Dendritic cell treated with granulocyte-macrophage colony-stimulating factor and Interleukin-4, amounts not matched to agents 40 ng/mL and 50 ng/mL, for 4 days (primary cell): ENCODE measurements at regions of chrX and their contacts with region 1.

Region 1: GRCh38 chrX:16786139-16786790 is at the start of gene TXLNG:
- H3K4me3 Mint-ChIP-seq: peak within 1 kb of the TSS; percentile 89
- H3K27ac Mint-ChIP-seq: peak within 1 kb of the TSS; percentile 84
- H3K4me1 Mint-ChIP-seq: no peaks in the 10 kb centered on the region
- H3K27me3 Mint-ChIP-seq: no peaks in the 10 kb centered on the region

Region 2: GRCh38 chrX:16643176-16643575 is 143.1 kb before region 1 on chrX:
- intact Hi-C with region 1: no loop called
- H3K4me3 Mint-ChIP-seq: no peak overlapping the region
- H3K27ac Mint-ChIP-seq: no peak overlapping the region
- H3K4me1 Mint-ChIP-seq: peaks cover 6% of the 10 kb centered on the region
- H3K27me3 Mint-ChIP-seq: no peaks in the 10 kb centered on the region

Region 3: DNA sequence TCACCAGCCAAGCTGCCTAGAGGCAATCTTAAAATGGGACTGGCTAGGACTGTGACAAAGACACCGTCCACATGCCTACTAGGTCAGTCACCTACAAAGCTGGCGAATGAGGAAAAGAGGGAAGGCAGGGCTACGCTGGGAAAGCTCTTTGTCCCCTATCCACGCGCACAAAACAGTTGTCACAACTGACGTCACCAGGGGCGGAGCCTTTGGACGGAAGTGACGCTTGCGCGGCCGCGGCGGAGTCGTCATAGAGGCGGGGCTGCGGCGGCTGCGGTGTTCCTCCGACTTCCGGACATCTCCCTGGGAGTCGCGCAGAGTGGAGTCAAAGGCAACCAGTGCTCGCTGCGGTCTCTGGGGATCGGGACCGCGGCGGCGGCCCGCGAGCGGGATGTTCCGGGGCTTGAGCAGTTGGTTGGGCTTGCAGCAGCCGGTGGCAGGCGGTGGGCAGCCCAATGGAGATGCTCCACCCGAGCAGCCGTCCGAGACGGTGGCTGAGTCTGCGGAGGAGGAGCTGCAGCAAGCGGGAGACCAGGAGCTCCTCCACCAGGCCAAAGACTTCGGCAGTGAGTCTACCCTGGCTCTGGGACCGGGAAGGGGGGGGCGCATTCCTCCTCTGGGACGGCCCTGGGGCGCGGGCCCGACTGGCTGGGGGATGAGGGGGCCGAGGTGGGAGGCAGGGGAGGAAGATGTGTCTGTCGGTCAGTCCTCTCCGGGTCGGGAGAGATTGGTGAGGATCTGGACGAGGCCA is 66.8 kb before region 1 on chrX and contains the start of gene SYAP1:
- intact Hi-C with region 1: loop called (anchors 10 kb)
- H3K4me3 Mint-ChIP-seq: peak within 1 kb of the TSS; percentile 96
- H3K27ac Mint-ChIP-seq: peak within 1 kb of the TSS; percentile 97
- H3K4me1 Mint-ChIP-seq: peaks cover 5% of the 10 kb centered on the region
- H3K27me3 Mint-ChIP-seq: no peaks in the 10 kb centered on the region